WTC11 (cell line): ENCODE measurements at regions of chr3 and their contacts with region 1.

Region 1: DNA sequence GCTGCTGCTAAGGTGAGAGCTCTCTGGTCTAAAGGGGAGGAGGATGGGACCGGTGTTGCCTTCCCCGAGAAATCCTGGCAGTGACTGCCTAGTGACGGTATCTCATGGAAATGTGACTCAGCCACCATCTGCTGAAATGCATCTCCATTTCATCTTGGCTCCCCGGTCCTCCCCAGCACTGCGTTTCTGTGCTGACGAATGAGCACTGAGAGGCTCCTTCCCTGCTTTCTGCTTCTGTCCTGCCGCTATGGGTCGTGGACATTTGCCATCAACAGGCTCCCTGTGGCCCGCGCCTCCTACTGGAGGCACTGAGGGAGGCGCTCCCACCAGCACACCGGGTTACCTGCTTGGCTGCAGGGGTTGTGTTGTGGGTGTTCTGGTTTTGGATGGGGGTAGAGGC is 13.5 kb upstream of the SEC13 start:
- DNase-seq: peak; percentile 42
- ATAC-seq: peak; percentile 65
- H3K4me3 Mint-ChIP-seq: no peak overlapping the region
- H3K27ac Mint-ChIP-seq: no peak overlapping the region
- H3K4me1 Mint-ChIP-seq: 0 out of 2 replicates have a peak, but pooled peaks cover 5% of the 10 kb centered on the region
- H3K27me3 Mint-ChIP-seq: peaks cover 6% of the 10 kb centered on the region
- CTCF ChIP-seq: no peak

Region 2: DNA sequence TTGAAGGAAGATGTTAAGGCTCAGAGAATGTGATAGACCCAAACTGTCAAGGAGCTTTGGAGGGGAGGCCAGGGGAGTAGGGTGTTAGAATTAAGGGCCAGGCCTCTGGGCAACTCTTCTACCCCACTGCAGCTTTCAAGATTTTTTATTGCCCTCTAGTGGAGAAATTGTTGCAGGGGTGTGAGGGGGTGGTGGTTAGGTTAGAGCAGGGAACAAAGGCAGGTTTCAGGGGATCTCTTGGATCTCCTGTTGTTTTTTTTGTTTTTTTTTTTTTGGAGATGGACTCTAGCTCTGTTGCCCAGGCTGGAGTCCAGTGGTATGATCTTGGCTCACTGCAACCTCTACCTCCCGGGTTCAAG is 12.1 kb before region 1 on chr3:
- CTCF ChIA-PET with region 1: interaction called, 13 read pairs
- POLR2A ChIA-PET with region 1: no interaction called
- DNase-seq: no peak
- ATAC-seq: peak; percentile 58
- H3K4me3 Mint-ChIP-seq: no peak overlapping the region
- H3K27ac Mint-ChIP-seq: no peak overlapping the region
- H3K4me1 Mint-ChIP-seq: peaks cover 10% of the 10 kb centered on the region
- H3K27me3 Mint-ChIP-seq: peaks cover 16% of the 10 kb centered on the region; the same call in 1 of the 2 replicates
- CTCF ChIP-seq: 0 out of 2 replicates have a peak, but pooled peaks have one; percentile 26

Region 3: DNA sequence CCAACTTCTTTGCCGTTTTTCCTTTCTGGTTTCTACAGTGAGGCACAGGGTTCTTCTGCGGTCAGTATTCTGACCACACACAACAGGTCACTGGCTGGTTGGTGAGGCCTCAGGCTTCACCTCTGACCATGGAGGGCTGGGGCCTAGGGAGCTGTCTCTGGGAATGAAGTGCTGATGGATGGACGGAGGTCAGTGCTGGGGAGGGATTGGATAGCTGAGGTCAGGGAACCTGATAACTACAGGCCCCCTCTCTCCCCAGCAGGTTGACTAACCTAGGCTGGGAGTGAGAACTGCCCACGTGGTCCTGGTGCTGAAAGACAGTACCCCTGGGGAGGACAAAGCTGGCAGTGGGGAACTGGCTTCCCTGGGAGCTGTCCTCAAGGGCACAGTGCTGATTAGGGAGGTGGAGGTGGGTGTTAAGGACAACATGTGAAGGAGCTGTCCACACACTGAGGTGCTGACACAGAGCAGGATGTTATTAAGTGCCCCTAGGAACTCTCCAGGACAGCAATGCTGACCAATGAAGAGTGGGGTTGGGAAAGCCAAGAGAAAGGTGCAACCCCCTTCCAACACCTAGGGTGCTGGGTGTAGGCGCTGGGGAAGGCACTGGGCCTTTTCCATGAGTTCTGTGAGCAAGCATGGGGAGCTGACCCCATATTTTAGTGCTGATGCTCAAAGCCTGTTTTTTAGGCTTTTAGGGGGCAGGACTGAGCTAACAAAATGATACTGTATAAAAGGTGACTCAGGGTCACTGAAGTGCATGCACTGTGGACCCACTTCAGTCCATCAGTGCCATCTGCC is 125.7 kb after region 1 on chr3:
- CTCF ChIA-PET with region 1: no interaction called
- POLR2A ChIA-PET with region 1: no interaction called
- DNase-seq: peak; percentile 98
- ATAC-seq: peak; percentile 98
- H3K4me3 Mint-ChIP-seq: no peak overlapping the region
- H3K27ac Mint-ChIP-seq: no peak overlapping the region
- H3K4me1 Mint-ChIP-seq: peaks cover 6% of the 10 kb centered on the region
- H3K27me3 Mint-ChIP-seq: no peaks in the 10 kb centered on the region
- CTCF ChIP-seq: no peak